ENCODE measurements at regions of chr5 and their contacts with region 1.

Region 1: DNA sequence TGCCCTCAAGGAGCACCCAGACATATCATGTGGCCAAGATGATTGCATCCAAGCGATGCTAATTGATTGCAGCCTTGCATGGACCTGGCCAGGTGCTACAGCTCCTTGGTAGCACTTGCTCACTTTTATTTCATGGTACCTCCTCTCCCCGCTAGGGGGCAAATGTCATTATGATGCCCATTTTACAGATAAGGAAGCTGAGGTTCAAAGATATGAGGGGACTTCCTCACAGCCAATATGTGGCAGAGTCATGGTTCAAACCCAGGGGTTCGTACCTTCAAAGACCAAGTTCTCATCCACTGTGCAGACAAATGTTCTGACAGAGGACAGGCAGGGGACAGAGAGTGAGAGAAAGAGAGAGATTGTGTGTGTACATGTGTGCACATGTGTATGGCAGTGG is 21.9 kb upstream of the KCNMB1 start:
- DNase-seq: no peak
- ATAC-seq: no peak
- H3K4me3 ChIP-seq: no peak overlapping the region
- H3K27ac ChIP-seq: no peak overlapping the region
- H3K4me1 ChIP-seq: no peaks in the 10 kb centered on the region
- H3K27me3 ChIP-seq: no peaks in the 10 kb centered on the region
- CTCF ChIP-seq: no peak
- POLR2A ChIP-seq: no peak

Region 2: GRCh38 chr5:170225326-170226128 is 185.6 kb before region 1 on chr5:
- intact Hi-C with region 1: loop called (anchors 10 kb)
- DNase-seq: peak; percentile 63 to 78 (median 72)
- ATAC-seq: peak; percentile 42
- H3K4me3 ChIP-seq: no peak overlapping the region
- H3K27ac ChIP-seq: no peak overlapping the region
- H3K4me1 ChIP-seq: no peaks in the 10 kb centered on the region
- H3K27me3 ChIP-seq: no peaks in the 10 kb centered on the region
- CTCF ChIP-seq: peak; percentile 40 to 79 (median 67)
- POLR2A ChIP-seq: no peak